Activated CD8-positive, alpha-beta T cell treated with anti-CD3 and anti-CD28 coated beads for 36 hours (primary cell): ENCODE measurements at regions of chr3 and their contacts with region 1.

Region 1: DNA sequence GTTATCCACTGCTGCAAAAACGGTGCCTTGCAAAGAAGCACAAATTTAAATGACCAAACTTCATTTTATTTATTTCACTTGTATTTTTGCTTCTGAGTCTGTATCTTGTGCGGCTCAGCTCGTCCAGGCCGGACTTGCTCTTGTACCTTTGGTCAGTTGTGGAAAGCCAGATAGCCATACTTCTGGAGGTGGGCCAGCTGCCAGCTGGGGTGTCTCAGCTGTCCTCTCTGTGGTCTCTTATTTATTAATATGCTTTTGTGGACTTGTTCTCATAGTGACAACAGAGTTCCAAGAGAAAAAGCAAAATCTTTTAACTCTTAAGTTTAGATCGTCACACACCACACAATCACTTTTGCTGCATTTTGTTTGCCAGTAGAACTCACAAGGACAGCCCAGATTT is 87.7 kb downstream of the IL1RAP start:
- DNase-seq: no peak
- ATAC-seq: no peak
- H3K4me3 Mint-ChIP-seq: no peak overlapping the region
- H3K27ac Mint-ChIP-seq: no peak overlapping the region
- H3K4me1 Mint-ChIP-seq: peaks cover 7% of the 10 kb centered on the region
- H3K27me3 Mint-ChIP-seq: no peaks in the 10 kb centered on the region
- CTCF ChIP-seq: no peak

Region 2: DNA sequence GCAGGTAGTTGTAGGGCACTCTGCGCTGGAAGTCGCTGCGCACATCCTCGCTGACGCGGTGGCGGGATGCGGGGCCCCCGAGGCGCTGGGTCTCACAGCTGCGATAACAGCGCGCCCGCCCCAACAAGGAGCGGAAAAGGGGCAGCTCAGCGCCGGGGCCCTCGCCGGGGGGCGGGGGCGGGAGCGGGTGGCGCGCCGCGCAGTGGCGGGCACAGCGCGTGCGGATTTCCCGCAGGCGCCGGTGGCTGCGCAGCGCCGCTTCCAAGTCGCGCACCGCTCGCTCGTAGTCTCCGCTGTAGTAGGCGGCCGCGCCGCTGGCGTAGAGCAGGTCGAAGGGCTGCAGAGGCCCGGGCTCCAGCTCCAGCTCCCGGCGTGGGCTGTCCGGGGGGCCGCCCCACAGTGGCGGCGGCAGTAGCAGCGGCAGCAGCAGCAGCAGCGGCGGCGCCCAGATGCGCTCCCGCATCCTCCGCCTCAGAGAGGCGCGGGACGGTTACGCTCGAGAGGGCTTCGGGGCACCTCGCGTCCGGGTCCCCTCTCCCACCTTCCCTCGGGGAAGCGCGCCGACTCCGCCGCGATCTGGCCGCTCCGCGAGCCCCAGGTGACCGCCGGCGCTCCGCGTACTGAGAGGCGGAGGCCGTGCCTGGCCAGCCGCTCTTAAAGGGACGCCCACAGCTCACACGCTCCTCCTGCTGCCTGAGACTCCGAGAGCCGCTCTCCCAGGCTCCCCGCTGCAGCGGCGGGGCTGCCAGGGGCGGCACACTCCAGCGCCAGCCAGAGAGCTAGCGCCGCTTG is 481.2 kb before region 1 on chr3 and contains the start of gene P3H2:
- CTCF ChIA-PET with region 1: no interaction called
- POLR2A ChIA-PET with region 1: no interaction called
- intact Hi-C with region 1: loop called (anchors 10 kb)
- DNase-seq: peak; percentile 45
- ATAC-seq: peak; percentile 81
- H3K4me3 Mint-ChIP-seq: peak within 1 kb of the TSS; percentile 55
- H3K27ac Mint-ChIP-seq: no peak within 1 kb of the TSS
- H3K4me1 Mint-ChIP-seq: peaks cover 3% of the 10 kb centered on the region
- H3K27me3 Mint-ChIP-seq: peaks cover 47% of the 10 kb centered on the region
- CTCF ChIP-seq: peak; percentile 14
- total RNA-seq, gene P3H2: not detected

Region 3: DNA sequence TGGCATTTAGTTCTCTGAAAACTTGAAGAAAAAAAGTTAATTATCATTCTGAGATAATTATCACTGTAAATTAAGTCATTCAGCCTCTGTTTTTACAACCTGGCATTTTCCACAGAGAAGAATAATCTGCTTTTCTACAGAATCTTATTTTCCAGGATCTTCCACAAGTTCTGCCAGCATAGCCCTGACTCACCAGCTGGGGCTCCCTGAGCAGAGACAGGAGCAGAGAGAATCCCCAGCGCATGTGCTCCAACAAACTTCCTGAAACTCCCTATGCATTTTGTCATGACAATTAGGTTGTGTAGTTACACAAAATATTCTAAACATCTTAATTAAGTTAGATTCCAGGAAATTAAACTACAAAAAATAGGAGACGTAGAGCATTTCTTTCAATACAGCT is 119.8 kb before region 1 on chr3:
- CTCF ChIA-PET with region 1: no interaction called
- POLR2A ChIA-PET with region 1: no interaction called
- intact Hi-C with region 1: no loop called
- DNase-seq: no peak
- ATAC-seq: no peak
- H3K4me3 Mint-ChIP-seq: no peak overlapping the region
- H3K27ac Mint-ChIP-seq: no peak overlapping the region
- H3K4me1 Mint-ChIP-seq: no peaks in the 10 kb centered on the region
- H3K27me3 Mint-ChIP-seq: peaks cover 21% of the 10 kb centered on the region
- CTCF ChIP-seq: no peak

Region 4: GRCh38 chr3:190747571-190747970 is 145.9 kb after region 1 on chr3:
- CTCF ChIA-PET with region 1: no interaction called
- POLR2A ChIA-PET with region 1: no interaction called
- intact Hi-C with region 1: no loop called
- DNase-seq: no peak
- ATAC-seq: no peak
- H3K4me3 Mint-ChIP-seq: no peak overlapping the region
- H3K27ac Mint-ChIP-seq: no peak overlapping the region
- H3K4me1 Mint-ChIP-seq: no peaks in the 10 kb centered on the region
- H3K27me3 Mint-ChIP-seq: peaks cover 2% of the 10 kb centered on the region
- CTCF ChIP-seq: no peak